HEK293T (cell line): ENCODE measurements at regions of chr4 and their contacts with region 1.

Region 1: GRCh38 chr4:110165382-110166285 is 32.8 kb downstream of the ELOVL6 start:
- DNase-seq: peak; percentile 15

Region 2: GRCh38 chr4:110196206-110196870 is 30.7 kb after region 1 on chr4:
- CTCF ChIA-PET with region 1: no interaction called
- POLR2A ChIA-PET with region 1: interaction called, 10 read pairs
- DNase-seq: peak; percentile 39

Region 3: GRCh38 chr4:110245577-110245976 is 79.9 kb after region 1 on chr4:
- CTCF ChIA-PET with region 1: no interaction called
- POLR2A ChIA-PET with region 1: no interaction called
- DNase-seq: no peak

Region 4: DNA sequence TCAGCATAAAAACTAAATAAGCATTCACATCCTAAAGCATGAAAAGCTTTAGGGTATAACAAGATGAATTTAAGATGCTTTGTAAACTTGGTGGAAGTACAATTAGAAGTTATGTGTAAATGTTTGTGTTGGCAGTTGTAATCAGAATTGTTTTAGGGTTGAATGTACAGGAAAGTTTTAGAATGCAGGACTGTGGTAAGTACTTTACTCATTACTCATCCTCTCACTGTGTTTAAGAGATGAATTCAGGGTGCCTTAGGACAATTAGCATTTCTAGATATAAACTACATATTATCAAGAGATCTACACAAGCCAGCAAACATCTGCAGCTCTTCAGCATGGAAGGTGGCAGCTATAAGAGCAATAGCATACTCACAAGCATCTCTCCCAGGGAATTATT is 110.2 kb after region 1 on chr4:
- CTCF ChIA-PET with region 1: no interaction called
- POLR2A ChIA-PET with region 1: no interaction called
- DNase-seq: no peak

Region 5: DNA sequence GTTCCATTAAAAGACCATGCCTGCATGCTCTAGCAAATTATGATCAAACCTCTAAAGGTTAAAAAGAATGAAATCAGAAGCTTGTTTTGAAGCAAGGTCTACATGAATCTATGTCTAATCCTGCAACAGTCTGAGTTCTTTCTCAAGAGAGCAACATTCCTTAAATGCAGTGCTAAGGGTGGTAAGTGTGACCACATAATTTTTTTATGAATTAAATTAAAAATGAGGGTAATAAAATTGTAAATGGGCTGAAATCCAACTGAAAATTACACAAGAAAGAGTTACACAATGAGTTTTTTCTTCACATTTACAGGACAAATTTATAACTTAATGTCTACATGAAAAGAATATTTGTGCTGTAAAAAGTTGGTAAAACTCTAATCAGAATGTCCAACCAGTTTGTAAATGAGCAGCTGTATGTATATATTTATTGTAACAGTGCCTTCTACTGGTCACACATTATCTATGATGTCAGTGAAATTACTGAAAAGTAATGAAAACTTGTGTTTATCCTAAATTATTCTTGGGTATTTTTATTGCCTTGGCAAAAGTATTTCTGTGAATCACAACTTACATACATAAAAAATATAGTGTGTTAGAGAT is 793.5 kb after region 1 on chr4:
- CTCF ChIA-PET with region 1: no interaction called
- POLR2A ChIA-PET with region 1: no interaction called
- DNase-seq: no peak